Common myeloid progenitor, CD34-positive (primary cell): ENCODE measurements at regions of chr3 and their contacts with region 1.

Region 1: DNA sequence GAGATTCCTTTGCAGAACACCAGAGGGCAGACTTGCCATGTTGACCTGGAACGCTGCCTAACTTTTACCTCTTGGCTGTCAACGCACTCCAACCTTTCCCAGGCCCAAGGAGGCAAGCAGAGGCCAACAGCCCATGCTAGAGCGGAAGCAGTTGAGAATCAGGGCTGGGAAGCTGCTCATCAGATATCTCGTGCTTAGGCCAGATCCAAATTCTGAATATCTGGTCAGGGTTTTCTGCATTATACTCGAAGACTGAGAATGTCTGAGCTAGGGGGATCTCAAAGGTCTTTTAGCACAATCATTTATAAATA is 2.5 kb downstream of the XIRP1 start:
- DNase-seq: peak; percentile 68 to 84 (median 76)
- H3K4me3 ChIP-seq: no peak overlapping the region
- H3K27ac ChIP-seq: no peak overlapping the region
- H3K4me1 ChIP-seq: peaks cover 0 to 4% (median under 1%) of the 10 kb centered on the region in 4 experiments
- H3K27me3 ChIP-seq: no peaks in the 10 kb centered on the region

Region 2: GRCh38 chr3:39202094-39202493 is 12.2 kb after region 1 on chr3:
- CTCF ChIA-PET with region 1: interaction called, 58 read pairs
- POLR2A ChIA-PET with region 1: no interaction called
- DNase-seq: peak in 2 of 3 donors; percentile 42 to 58
- H3K4me3 ChIP-seq: no peak overlapping the region
- H3K27ac ChIP-seq: no peak overlapping the region
- H3K4me1 ChIP-seq: no peaks in the 10 kb centered on the region
- H3K27me3 ChIP-seq: no peaks in the 10 kb centered on the region

Region 3: GRCh38 chr3:39216176-39216790 is 26.4 kb after region 1 on chr3:
- CTCF ChIA-PET with region 1: interaction called, 36 read pairs
- POLR2A ChIA-PET with region 1: no interaction called
- DNase-seq: peak; percentile 61 to 92 (median 87)
- H3K4me3 ChIP-seq: peak overlapping the region in 1 of 7 experiments; percentile 17
- H3K27ac ChIP-seq: no peak overlapping the region
- H3K4me1 ChIP-seq: peaks cover 14 to 51% (median 29%) of the 10 kb centered on the region in 4 experiments
- H3K27me3 ChIP-seq: no peaks in the 10 kb centered on the region

Region 4: DNA sequence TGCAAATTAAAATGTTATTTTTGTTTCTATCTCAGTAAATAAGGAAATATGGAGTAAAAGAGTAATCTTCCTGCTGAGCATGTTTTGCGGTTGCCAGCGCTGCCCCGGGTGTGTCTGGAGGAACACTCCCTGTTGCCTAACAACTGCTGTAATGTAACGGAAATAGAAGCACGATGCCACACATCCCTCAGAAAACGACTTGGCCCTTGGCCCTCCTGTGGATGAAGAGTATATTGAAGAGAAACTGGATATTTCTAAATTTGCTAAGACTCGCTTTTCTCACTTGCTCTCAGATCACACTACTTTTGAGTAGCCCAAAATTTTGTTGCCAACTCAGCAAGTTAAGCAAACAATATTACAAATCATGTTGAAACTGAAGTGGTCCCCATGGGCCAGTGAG is 71.0 kb after region 1 on chr3:
- CTCF ChIA-PET with region 1: interaction called, 12 read pairs
- POLR2A ChIA-PET with region 1: interaction called, 3 read pairs
- DNase-seq: peak; percentile 96 to 99 (median 97)
- H3K4me3 ChIP-seq: peak overlapping the region in 1 of 7 experiments; percentile 4
- H3K27ac ChIP-seq: peak overlapping the region in 1 of 2 experiments; percentile 72
- H3K4me1 ChIP-seq: peaks cover 19 to 65% (median 36%) of the 10 kb centered on the region in 4 experiments
- H3K27me3 ChIP-seq: no peaks in the 10 kb centered on the region